PC-9 (cell line): ENCODE measurements at regions of chr11 and their contacts with region 1.

Region 1: GRCh38 chr11:92269021-92269420 is 44.4 kb downstream of the FAT3 start:
- DNase-seq: peak; percentile 37 to 100
- H3K4me3 ChIP-seq: no peak overlapping the region
- H3K27ac ChIP-seq: peak overlapping the region; percentile 98
- H3K4me1 ChIP-seq: peaks cover 32% of the 10 kb centered on the region
- H3K27me3 ChIP-seq: no peaks in the 10 kb centered on the region
- CTCF ChIP-seq: no peak

Region 2: GRCh38 chr11:91396236-91397133 is 872.5 kb before region 1 on chr11:
- CTCF ChIA-PET with region 1: no interaction called
- POLR2A ChIA-PET with region 1: no interaction called
- intact Hi-C with region 1: loop called (anchors 2 kb)
- DNase-seq: peak; percentile 20 to 93
- H3K4me3 ChIP-seq: peak overlapping the region; percentile 45
- H3K27ac ChIP-seq: peak overlapping the region; percentile 99
- H3K4me1 ChIP-seq: peaks cover 55% of the 10 kb centered on the region
- H3K27me3 ChIP-seq: no peaks in the 10 kb centered on the region
- CTCF ChIP-seq: no peak

Region 3: DNA sequence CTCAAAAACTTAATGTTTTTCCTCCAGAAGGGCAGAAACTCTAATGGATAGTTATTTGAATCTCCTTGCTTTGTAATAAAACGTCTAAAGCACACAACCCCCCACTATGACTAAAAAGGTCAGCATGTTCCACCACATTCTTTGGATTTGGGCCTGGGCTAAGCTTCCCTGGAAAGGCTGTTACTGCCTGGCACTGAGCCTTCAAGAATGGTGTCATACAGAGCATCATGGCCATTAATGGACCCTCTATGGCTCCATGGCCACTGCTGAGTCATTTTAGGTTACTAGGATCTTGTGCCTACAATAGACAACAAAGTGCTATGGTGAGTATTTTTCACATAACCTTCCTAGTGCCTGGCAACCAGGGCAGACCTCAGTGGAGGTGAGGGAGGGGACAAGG is 287.0 kb before region 1 on chr11:
- CTCF ChIA-PET with region 1: no interaction called
- POLR2A ChIA-PET with region 1: no interaction called
- intact Hi-C with region 1: loop called (anchors 1 kb)
- DNase-seq: peak; percentile 73 to 88
- H3K4me3 ChIP-seq: no peak overlapping the region
- H3K27ac ChIP-seq: peak overlapping the region; percentile 21; the same call in 1 of the 2 replicates
- H3K4me1 ChIP-seq: peaks cover 45% of the 10 kb centered on the region
- H3K27me3 ChIP-seq: no peaks in the 10 kb centered on the region
- CTCF ChIP-seq: no peak

Region 4: DNA sequence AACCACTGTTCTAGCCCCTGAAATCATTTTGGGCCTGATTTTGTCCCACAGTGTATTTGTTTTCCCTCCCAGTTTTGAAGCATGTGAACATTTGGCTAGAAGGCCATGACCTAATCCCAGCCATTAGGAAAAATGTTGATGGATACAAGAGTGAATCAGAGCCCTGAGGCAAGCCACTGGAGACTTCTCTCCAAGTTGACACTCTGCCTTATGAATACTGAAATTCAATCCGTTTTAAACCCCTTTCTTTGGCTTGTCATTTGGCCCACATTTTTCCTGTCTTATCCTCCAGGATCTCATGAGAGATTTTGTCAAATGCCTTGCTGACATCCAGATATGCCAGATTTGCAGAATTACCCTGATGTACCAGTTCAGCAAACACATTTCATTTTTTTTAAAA is 114.4 kb after region 1 on chr11:
- CTCF ChIA-PET with region 1: no interaction called
- POLR2A ChIA-PET with region 1: no interaction called
- intact Hi-C with region 1: loop called (anchors 1 kb)
- DNase-seq: peak; percentile 57 to 89
- H3K4me3 ChIP-seq: no peak overlapping the region
- H3K27ac ChIP-seq: peak overlapping the region; percentile 18; the same call in 1 of the 2 replicates
- H3K4me1 ChIP-seq: peaks cover 23% of the 10 kb centered on the region
- H3K27me3 ChIP-seq: no peaks in the 10 kb centered on the region
- CTCF ChIP-seq: no peak